ENCODE measurements at regions of chr19 and their contacts with region 1.

Region 1: DNA sequence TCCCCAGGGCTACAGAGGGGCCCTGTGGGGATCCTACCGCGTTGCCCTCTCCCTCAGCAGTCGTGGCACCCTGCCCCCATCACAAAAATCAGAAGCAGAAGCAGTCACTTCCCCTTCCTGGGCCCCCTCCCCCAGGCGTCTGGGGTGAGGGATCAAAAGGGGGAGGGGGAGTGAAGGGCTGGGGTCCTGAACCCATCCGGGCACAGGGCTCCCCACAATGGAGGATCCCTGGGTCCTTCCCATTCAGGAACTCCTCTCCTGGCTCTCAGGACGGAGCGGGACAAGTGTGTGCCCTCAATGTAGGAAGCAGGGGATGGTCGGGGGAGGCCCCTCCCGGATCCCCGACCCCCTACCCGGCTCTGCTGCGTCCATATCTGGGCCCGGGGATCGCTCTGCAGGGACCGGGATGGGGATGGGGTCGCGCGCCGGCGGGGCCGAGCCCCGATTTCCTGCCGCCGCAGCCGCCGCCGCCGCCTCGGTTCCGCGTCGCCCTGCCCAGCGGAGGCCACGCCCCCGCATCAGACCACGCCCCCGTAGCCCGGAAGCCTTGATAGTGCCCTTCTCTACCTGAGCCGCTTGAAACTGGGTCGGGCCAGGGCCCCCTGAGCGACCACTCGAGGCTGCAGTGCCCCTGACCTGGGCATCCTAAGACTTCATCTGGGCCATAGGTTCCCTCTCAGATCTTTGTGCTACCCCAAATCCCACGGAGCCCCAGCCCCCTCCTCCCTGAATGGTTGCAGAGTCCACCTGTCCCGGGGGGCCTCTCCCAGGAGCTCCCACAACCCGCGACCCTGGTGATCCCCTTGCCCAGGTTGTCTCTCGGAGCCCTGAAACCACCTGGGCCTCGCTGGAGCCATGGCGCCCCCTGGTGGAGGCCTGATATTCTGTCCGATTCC is at the start of gene GMIP:
- DNase-seq: peak; percentile 82 to 91 (median 88)
- ATAC-seq: peak; percentile 94
- H3K4me3 ChIP-seq: peak within 1 kb of the TSS; percentile 82
- H3K4me3 Mint-ChIP-seq: peak within 1 kb of the TSS; percentile 93 to 100 (median 98)
- H3K27ac ChIP-seq: peak within 1 kb of the TSS; percentile 89
- H3K27ac Mint-ChIP-seq: peak within 1 kb of the TSS; percentile 88 to 98 (median 97)
- H3K4me1 ChIP-seq: peaks cover 10 to 18% of the 10 kb centered on the region in 2 donors
- H3K4me1 Mint-ChIP-seq: peaks cover 12 to 25% (median 18%) of the 10 kb centered on the region in 7 donors
- H3K27me3 ChIP-seq: no peaks in the 10 kb centered on the region
- H3K27me3 Mint-ChIP-seq: no peaks in the 10 kb centered on the region
- total RNA-seq, gene GMIP: 97.2 to 141 (median 109) TPM

Region 2: DNA sequence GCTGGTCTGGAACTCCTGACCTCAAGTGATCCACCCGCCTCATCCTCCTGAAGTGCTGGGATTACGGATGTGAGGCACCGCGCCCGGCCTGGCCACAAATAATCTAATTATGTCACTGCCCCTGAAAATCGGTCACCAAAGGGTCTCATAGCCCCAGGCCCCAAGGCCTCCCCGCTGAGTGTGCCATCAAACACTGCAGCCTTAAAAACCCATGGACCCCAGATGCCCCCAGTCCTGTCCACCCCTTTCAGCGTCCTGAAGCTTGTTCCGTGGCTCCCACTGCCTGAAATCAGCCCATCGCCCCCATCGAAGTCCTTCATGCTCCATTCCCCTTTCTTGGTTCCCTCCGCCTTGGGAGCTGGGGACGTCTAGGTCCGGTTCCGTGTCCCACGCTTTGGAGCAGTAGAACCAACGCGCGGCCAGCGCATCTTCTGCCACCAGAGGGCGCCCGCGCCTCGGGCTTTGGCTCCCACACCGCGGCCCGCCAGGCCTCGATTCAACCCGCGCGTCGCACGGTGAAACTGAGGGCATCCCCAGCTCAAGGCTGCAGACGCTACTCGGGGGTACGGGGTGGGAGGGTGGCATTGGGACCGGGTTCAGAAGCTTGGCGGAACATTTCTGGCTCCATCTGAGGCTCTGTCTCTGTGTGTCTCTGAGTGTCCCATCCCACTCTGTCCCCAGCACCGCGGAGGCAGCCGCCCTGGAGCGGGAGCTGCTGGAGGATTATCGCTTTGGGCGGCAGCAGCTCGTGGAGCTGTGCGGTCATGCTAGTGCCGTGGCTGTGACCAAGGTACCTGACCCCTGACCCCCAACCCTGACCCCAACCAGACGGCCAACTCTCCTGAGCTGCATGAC is 111.2 kb before region 1 on chr19:
- CTCF ChIA-PET with region 1: interaction called, 25 read pairs
- POLR2A ChIA-PET with region 1: interaction called, 19 read pairs
- intact Hi-C with region 1: loop called (anchors 1 kb)
- DNase-seq: peak; percentile 69 to 93 (median 84)
- ATAC-seq: peak; percentile 90
- H3K4me3 ChIP-seq: no peak overlapping the region
- H3K4me3 Mint-ChIP-seq: no peak overlapping the region
- H3K27ac ChIP-seq: no peak overlapping the region
- H3K27ac Mint-ChIP-seq: peak overlapping the region in 8 of 9 donors; percentile 33 to 84 (median 76)
- H3K4me1 ChIP-seq: peaks cover 3 to 9% of the 10 kb centered on the region in 2 donors
- H3K4me1 Mint-ChIP-seq: peaks cover 7 to 22% (median 17%) of the 10 kb centered on the region in 7 donors
- H3K27me3 ChIP-seq: no peaks in the 10 kb centered on the region
- H3K27me3 Mint-ChIP-seq: peaks cover 0 to 6% (median 0%) of the 10 kb centered on the region in 5 donors

Region 3: GRCh38 chr19:19554074-19555023 is 89.1 kb before region 1 on chr19:
- CTCF ChIA-PET with region 1: interaction called, 3 read pairs
- POLR2A ChIA-PET with region 1: interaction called, 7 read pairs
- intact Hi-C with region 1: loop called in 1 of 2 experiments (anchors 2 kb)
- DNase-seq: peak in 4 of 9 donors; percentile 37 to 73 (median 52)
- ATAC-seq: peak; percentile 67
- H3K4me3 ChIP-seq: no peak overlapping the region
- H3K4me3 Mint-ChIP-seq: no peak overlapping the region
- H3K27ac ChIP-seq: no peak overlapping the region
- H3K27ac Mint-ChIP-seq: peak overlapping the region in 2 of 9 donors; percentile 46 to 77
- H3K4me1 ChIP-seq: peaks cover 0 to 6% of the 10 kb centered on the region in 2 donors
- H3K4me1 Mint-ChIP-seq: peaks cover 7 to 16% (median 13%) of the 10 kb centered on the region in 7 donors
- H3K27me3 ChIP-seq: no peaks in the 10 kb centered on the region
- H3K27me3 Mint-ChIP-seq: no peaks in the 10 kb centered on the region

Region 4: GRCh38 chr19:19597809-19598306 is 45.5 kb before region 1 on chr19:
- CTCF ChIA-PET with region 1: interaction called, 5 read pairs
- POLR2A ChIA-PET with region 1: interaction called, 6 read pairs
- intact Hi-C with region 1: loop called (anchors 1 kb)
- DNase-seq: peak in 8 of 9 donors; percentile 54 to 90 (median 84)
- ATAC-seq: peak; percentile 87
- H3K4me3 ChIP-seq: peak overlapping the region; percentile 52
- H3K4me3 Mint-ChIP-seq: peak overlapping the region; percentile 61 to 85 (median 74)
- H3K27ac ChIP-seq: peak overlapping the region; percentile 96
- H3K27ac Mint-ChIP-seq: peak overlapping the region; percentile 90 to 99 (median 97)
- H3K4me1 ChIP-seq: peaks cover 53 to 54% of the 10 kb centered on the region in 2 donors
- H3K4me1 Mint-ChIP-seq: peaks cover 29 to 75% (median 66%) of the 10 kb centered on the region in 7 donors
- H3K27me3 ChIP-seq: no peaks in the 10 kb centered on the region
- H3K27me3 Mint-ChIP-seq: no peaks in the 10 kb centered on the region

Region 5: DNA sequence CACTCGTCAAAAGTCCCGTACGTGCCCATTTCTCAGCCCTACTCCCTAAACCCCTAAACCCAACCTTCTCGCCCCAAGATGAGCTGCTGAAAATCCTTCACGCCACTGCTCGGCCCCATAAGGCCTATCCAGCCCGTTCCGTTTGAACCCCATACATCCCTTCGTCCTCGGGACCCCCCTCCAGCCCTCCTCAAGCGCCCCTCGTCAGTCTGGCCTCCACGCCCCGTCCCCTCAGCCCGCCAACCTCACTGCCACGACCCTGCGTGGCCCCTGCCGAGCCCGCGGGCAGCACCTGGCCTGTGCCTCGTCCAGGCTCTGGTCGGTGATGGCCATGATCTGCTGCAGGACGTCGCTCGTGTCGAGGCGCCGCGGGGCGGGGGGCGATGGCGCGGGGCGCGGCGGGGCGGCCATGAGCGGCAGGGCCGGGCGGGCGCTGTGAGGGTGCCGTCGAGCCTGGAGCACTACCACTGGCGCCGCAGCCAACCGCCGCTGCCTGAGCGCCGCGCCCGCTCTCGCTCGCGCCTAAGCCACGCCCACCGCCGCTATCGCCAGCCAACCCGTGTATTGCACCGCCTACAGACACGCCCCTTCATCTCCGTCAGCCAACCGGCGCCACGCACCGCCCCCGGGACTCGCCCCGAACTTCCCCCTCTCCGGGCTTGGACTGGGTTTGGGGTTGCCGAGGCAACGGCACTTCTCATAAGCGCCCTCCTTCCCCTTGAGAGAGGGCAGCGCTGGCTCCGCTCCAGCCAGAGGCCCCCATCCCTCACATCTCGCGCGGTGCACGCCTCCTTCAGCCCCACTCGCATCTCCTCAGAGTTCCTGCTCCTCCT is 25.0 kb before region 1 on chr19 and contains the start of gene PBX4:
- CTCF ChIA-PET with region 1: no interaction called
- POLR2A ChIA-PET with region 1: no interaction called
- intact Hi-C with region 1: loop called (anchors 1 kb)
- DNase-seq: peak; percentile 97 to 99 (median 99)
- ATAC-seq: peak; percentile 99
- H3K4me3 ChIP-seq: peak within 1 kb of the TSS; percentile 86
- H3K4me3 Mint-ChIP-seq: peak within 1 kb of the TSS; percentile 79 to 99 (median 90)
- H3K27ac ChIP-seq: peak within 1 kb of the TSS; percentile 82
- H3K27ac Mint-ChIP-seq: peak within 1 kb of the TSS; percentile 80 to 98 (median 94)
- H3K4me1 ChIP-seq: peaks cover 16 to 23% of the 10 kb centered on the region in 2 donors
- H3K4me1 Mint-ChIP-seq: peaks cover 34 to 50% (median 45%) of the 10 kb centered on the region in 7 donors
- H3K27me3 ChIP-seq: no peaks in the 10 kb centered on the region
- H3K27me3 Mint-ChIP-seq: no peaks in the 10 kb centered on the region
- total RNA-seq, gene PBX4: 22.6 to 42.7 (median 42.0) TPM

Region 6: DNA sequence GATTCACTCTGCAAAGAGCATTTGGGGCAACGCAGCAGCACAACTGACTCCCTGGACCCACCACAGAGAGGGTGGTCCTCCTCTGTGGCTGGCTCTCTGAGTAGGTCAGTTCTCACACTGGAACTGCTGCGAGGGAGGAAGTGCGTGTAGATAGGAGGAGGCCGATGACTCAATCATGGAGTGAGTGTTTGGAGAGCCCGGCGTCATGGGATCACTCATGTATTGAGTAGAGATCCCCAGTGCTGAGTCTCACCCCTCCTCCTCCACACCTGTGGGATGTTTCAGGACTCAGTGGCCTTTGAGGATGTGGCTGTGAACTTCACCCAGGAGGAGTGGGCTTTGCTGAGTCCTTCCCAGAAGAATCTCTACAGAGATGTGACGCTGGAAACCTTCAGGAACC is 34.2 kb after region 1 on chr19:
- CTCF ChIA-PET with region 1: no interaction called
- POLR2A ChIA-PET with region 1: no interaction called
- intact Hi-C with region 1: no loop called
- DNase-seq: no peak
- ATAC-seq: no peak
- H3K4me3 ChIP-seq: peak overlapping the region; percentile 22
- H3K4me3 Mint-ChIP-seq: peak overlapping the region in 6 of 10 donors; percentile 9 to 71 (median 48)
- H3K27ac ChIP-seq: no peak overlapping the region
- H3K27ac Mint-ChIP-seq: peak overlapping the region in 4 of 9 donors; percentile 28 to 58 (median 45)
- H3K4me1 ChIP-seq: no peaks in the 10 kb centered on the region
- H3K4me1 Mint-ChIP-seq: peaks cover 0 to 26% (median 17%) of the 10 kb centered on the region in 7 donors
- H3K27me3 ChIP-seq: no peaks in the 10 kb centered on the region
- H3K27me3 Mint-ChIP-seq: no peaks in the 10 kb centered on the region

Region 7: GRCh38 chr19:19956434-19957075 is 313.1 kb after region 1 on chr19:
- CTCF ChIA-PET with region 1: interaction called, 6 read pairs
- POLR2A ChIA-PET with region 1: no interaction called
- intact Hi-C with region 1: loop called in 1 of 2 experiments (anchors 1 kb)
- DNase-seq: no peak
- ATAC-seq: no peak
- H3K4me3 ChIP-seq: no peak overlapping the region
- H3K4me3 Mint-ChIP-seq: no peak overlapping the region
- H3K27ac ChIP-seq: no peak overlapping the region
- H3K27ac Mint-ChIP-seq: no peak overlapping the region
- H3K4me1 ChIP-seq: no peaks in the 10 kb centered on the region
- H3K4me1 Mint-ChIP-seq: peaks cover 0 to 8% (median 5%) of the 10 kb centered on the region in 7 donors
- H3K27me3 ChIP-seq: no peaks in the 10 kb centered on the region
- H3K27me3 Mint-ChIP-seq: no peaks in the 10 kb centered on the region

Measured in naive thymus-derived CD4-positive, alpha-beta T cell (primary cell).